ENCODE measurements at regions of chrX and their contacts with region 1.

Region 1: GRCh38 chrX:139559383-139560042 is 29.0 kb downstream of the F9 start:
- DNase-seq: peak; percentile 65
- H3K4me3 ChIP-seq: no peak overlapping the region
- H3K27ac ChIP-seq: no peak overlapping the region
- H3K4me1 ChIP-seq: peaks cover 7% of the 10 kb centered on the region
- H3K27me3 ChIP-seq: no peaks in the 10 kb centered on the region

Region 2: DNA sequence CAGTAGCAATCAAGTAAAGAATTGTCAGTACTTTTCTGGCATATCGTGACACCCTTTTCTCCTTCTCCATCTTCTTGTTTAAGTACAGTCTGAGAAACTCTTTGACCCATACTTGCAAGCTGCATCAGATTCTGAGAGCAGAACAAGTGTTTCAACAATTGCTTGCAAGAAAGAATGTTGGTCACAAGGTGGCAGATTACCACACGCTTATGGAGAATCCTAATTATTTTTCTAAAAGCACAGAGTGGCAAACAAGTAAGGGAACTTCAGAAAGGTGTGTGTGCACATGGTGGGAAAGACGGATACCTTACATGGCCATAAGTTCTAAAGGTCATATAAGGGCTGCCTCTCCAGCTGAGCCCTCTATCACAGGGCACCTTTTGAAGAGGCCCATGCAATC is 711.6 kb before region 1 on chrX:
- in situ Hi-C with region 1: loop called (anchors 25 kb)
- DNase-seq: peak; percentile 51
- H3K4me3 ChIP-seq: no peak overlapping the region
- H3K27ac ChIP-seq: no peak overlapping the region
- H3K4me1 ChIP-seq: no peaks in the 10 kb centered on the region
- H3K27me3 ChIP-seq: no peaks in the 10 kb centered on the region

Measured in GM23248 (cell line).